Aorta (tissue), 5 donors: ENCODE measurements at regions of chr7 and their contacts with region 1.

Region 1: GRCh38 chr7:107725151-107725740 is 18.7 kb upstream of the CBLL1 start:
- DNase-seq: no peak
- ATAC-seq: peak; percentile 64
- H3K4me3 ChIP-seq: no peak overlapping the region
- H3K27ac ChIP-seq: no peak overlapping the region
- H3K4me1 ChIP-seq: no peaks in the 10 kb centered on the region
- H3K27me3 ChIP-seq: no peaks in the 10 kb centered on the region

Region 2: DNA sequence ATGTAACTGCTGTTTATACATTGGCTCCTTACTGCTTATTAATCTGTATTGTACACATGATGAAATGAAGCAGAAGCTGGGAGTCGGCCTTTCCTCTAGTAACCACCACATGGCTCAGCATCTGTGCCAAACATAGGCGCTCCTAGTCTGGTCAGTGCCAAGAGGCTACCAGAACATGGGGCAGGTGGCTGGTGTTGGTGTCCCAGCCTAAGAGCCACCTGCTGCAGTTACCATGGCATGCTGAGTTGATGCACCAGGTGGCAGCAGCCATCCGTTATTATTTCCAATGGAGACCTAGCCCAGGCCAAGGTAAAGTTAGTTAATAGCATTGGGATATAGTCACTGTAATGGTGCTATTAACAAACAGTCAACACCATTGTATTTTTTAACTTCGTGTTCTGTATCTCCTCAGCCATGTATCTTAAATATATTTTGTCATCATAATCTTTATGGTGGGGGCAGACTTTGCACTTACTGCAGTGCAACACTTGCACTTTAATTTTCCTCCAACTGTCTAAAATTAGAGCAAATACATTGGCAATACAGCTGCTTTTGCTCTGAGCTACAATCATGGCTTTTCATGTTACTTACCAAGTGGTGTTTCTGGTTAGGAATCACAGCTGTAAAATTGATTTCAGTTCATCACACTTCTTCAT is 523.3 kb before region 1 on chr7:
- intact Hi-C with region 1: loop called (anchors 10 kb)
- DNase-seq: no peak
- ATAC-seq: peak; percentile 54
- H3K4me3 ChIP-seq: no peak overlapping the region
- H3K27ac ChIP-seq: no peak overlapping the region
- H3K4me1 ChIP-seq: no peaks in the 10 kb centered on the region
- H3K27me3 ChIP-seq: no peaks in the 10 kb centered on the region

Region 3: GRCh38 chr7:107462740-107463444 is 262.4 kb before region 1 on chr7:
- intact Hi-C with region 1: loop called (anchors 2 kb)
- DNase-seq: peak in 1 of 2 donors; percentile 57
- ATAC-seq: peak; percentile 90
- H3K4me3 ChIP-seq: no peak overlapping the region
- H3K27ac ChIP-seq: no peak overlapping the region
- H3K4me1 ChIP-seq: peaks cover 0 to 3% of the 10 kb centered on the region in 2 donors
- H3K27me3 ChIP-seq: no peaks in the 10 kb centered on the region

Region 4: GRCh38 chr7:107563775-107564552 is 161.3 kb before region 1 on chr7 and contains the starts of genes COG5 and DUS4L:
- intact Hi-C with region 1: loop called in 1 of 2 experiments (anchors 10 kb)
- DNase-seq: peak; percentile 88 to 95
- ATAC-seq: peak; percentile 96
- H3K4me3 ChIP-seq: peak within 1 kb of the TSS; percentile 29 to 81
- H3K27ac ChIP-seq: peak within 1 kb of the TSS; percentile 64 to 69
- H3K4me1 ChIP-seq: peaks cover 0 to 3% of the 10 kb centered on the region in 2 donors
- H3K27me3 ChIP-seq: no peaks in the 10 kb centered on the region
- total RNA-seq, gene COG5: 55.9 to 58.2 TPM
- total RNA-seq, gene DUS4L: 6.4 to 6.8 TPM

Region 5: DNA sequence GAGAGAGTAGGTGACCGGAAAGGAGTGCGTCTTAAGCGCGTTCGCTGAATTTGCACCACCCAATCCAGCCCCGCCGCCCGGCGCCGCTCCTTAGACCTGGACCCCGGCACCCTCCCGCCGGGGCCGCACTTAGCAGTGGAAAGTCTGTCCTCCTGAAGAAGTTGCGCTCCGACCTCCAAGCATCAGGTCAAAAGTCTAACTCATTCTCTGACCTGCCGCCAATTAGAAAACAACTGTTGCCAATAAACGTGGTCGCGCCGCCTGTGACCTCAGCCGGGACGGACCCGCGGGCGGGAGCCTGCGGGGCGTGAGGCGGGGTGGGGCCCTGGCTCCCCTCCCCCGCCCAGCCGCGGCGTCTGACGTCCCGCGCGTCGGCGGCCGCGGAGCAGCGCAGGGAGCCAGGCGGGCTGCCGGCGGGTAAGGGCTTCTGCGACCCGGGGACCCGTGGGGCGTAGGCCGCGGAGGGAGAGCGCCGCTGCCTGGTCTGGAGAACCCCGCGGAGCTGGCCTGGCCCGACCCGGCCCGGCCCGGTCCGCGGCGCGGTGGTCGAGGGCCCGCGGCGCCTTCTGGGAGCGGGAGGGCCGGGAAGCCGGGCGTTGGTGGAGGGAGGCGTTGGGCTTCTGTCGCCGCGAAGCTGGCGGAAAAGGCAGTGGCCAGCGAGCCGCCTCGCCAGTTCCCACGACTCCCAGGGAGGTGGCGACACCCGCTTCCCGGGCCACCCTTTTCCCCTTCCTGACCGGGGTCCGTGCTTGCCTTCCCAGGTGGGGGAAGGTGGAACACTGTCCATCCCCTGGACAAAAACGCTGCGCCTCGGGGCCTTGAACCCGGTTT is 145.1 kb before region 1 on chr7 and contains the start of gene BCAP29:
- intact Hi-C with region 1: loop called in 1 of 2 experiments (anchors 10 kb)
- DNase-seq: peak; percentile 83 to 93
- ATAC-seq: peak; percentile 92
- H3K4me3 ChIP-seq: peak within 1 kb of the TSS; percentile 71 to 99
- H3K27ac ChIP-seq: peak within 1 kb of the TSS; percentile 65 to 100
- H3K4me1 ChIP-seq: peaks cover 0 to 3% of the 10 kb centered on the region in 2 donors
- H3K27me3 ChIP-seq: no peaks in the 10 kb centered on the region
- total RNA-seq, gene BCAP29: 96.1 to 139 TPM